ENCODE measurements at regions of chr7 and their contacts with region 1.

Region 1: DNA sequence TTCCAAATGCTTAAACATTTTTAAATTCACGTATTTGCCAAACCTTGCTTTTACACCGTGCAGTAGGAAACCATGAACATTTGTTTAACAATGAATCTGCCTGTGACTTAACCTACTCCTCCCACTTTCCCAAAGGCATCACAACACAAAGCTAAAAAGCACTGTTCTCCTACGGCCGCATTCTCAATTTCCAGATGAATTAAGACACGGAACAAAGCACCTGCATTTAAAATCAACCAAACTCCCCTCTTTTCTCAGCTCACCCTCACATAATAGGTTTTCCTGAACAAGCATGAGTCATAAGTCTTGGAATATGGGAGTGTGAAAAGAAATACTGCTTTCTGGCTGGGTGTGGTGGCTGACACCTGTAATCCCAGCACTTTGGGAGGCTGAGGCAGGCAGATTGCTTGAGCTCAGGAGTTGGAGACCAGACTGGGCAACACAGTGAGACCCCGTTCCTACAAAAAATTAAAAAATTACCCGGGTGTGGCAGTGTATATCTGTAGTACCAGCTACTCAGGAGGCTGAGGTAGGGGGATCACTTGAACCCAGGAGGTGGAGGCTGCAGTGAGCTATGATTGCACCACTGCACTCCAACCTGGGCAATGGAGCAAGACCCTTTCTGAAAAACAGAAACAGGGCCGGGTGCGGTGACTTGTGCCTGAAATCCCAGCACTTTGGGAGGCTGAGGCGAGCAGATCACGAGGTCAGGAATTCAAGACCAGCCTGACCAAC is 51.7 kb upstream of the CYTH3 start:
- DNase-seq: no peak
- H3K4me3 Mint-ChIP-seq: no peak overlapping the region
- H3K27ac Mint-ChIP-seq: no peak overlapping the region
- H3K4me1 Mint-ChIP-seq: peaks cover 8% of the 10 kb centered on the region
- H3K27me3 Mint-ChIP-seq: no peaks in the 10 kb centered on the region
- CTCF ChIP-seq: no peak

Region 2: DNA sequence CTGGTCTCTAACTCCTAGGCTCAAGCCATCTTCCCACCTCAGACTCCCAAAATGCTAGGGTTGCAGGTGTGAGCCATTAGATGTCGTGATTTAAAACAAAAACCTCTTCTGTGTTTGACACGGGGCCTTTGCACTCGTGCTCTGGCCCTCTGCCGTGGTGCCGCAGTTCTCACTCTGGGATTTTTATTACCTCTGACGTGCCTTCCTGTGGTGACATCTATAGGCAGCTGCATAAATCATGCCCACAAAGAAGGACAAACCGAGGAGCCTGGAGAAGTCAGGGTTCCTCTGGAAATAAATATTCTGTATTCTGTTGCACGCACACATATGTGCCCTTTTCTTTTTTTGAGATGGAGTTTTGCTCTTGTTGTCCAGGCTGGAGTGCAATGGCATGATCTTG is 469.4 kb before region 1 on chr7:
- CTCF ChIA-PET with region 1: no interaction called
- intact Hi-C with region 1: loop called (anchors 10 kb)
- DNase-seq: no peak
- H3K4me3 Mint-ChIP-seq: no peak overlapping the region
- H3K27ac Mint-ChIP-seq: no peak overlapping the region
- H3K4me1 Mint-ChIP-seq: no peaks in the 10 kb centered on the region
- H3K27me3 Mint-ChIP-seq: no peaks in the 10 kb centered on the region
- CTCF ChIP-seq: no peak

Region 3: GRCh38 chr7:6160191-6160623 is 163.9 kb before region 1 on chr7:
- CTCF ChIA-PET with region 1: interaction called, 6 read pairs
- intact Hi-C with region 1: loop called (anchors 2 kb)
- DNase-seq: peak; percentile 58
- H3K4me3 Mint-ChIP-seq: no peak overlapping the region
- H3K27ac Mint-ChIP-seq: no peak overlapping the region
- H3K4me1 Mint-ChIP-seq: no peaks in the 10 kb centered on the region
- H3K27me3 Mint-ChIP-seq: no peaks in the 10 kb centered on the region
- CTCF ChIP-seq: no peak

Region 4: GRCh38 chr7:6175645-6176044 is 148.5 kb before region 1 on chr7:
- CTCF ChIA-PET with region 1: no interaction called
- intact Hi-C with region 1: loop called (anchors 5 kb)
- DNase-seq: peak; percentile 42
- H3K4me3 Mint-ChIP-seq: no peak overlapping the region
- H3K27ac Mint-ChIP-seq: no peak overlapping the region
- H3K4me1 Mint-ChIP-seq: peaks cover 8% of the 10 kb centered on the region
- H3K27me3 Mint-ChIP-seq: no peaks in the 10 kb centered on the region
- CTCF ChIP-seq: no peak

Measured in Calu3 (cell line).